Calu3 (cell line): ENCODE measurements at regions of chr2 and their contacts with region 1.

Region 1: GRCh38 chr2:173210270-173211196 is 134.9 kb downstream of the MAP3K20 start:
- DNase-seq: peak; percentile 65
- H3K4me3 Mint-ChIP-seq: no peak overlapping the region
- H3K27ac Mint-ChIP-seq: no peak overlapping the region
- H3K4me1 Mint-ChIP-seq: peaks cover 9% of the 10 kb centered on the region
- H3K27me3 Mint-ChIP-seq: no peaks in the 10 kb centered on the region
- CTCF ChIP-seq: peak; percentile 82

Region 2: DNA sequence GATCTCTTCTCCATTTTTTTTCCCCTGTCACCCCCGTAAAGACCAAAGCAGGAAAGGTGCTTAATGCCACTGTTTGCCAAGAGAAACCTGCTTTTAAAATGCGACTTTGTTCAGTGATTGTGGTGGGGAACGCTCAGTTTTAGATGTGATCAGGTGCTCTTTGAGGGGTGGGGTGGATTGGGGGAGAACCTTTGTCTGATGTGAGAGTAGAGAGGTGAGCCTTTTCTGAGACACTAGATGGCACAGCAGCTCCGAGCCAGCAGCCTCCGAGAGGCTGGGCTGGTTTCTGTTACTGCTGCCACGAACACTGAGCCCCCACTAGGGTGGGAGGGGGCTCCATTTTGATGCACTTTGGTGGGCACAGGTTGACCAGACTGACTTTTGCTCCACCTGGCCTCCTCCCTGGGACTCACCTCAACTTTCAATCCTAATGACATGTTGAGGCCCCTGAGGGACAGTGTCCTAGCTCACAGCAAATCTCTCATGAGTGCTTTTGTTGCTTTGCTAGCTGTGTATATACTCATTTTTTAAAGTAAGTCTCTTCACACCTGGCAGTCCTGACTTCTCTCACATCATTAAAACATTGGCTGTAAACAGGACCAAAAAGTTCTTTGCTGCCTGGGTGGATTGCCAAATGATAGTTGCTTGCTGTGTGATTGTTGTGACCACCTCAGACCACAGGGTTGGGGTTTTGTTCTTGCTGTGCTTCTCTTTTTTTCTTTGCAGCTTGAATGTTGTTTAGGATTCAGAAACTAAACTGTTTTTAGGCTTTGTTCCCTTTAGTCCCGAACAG is 233.1 kb before region 1 on chr2:
- CTCF ChIA-PET with region 1: no interaction called
- intact Hi-C with region 1: loop called (anchors 5 kb)
- DNase-seq: no peak
- H3K4me3 Mint-ChIP-seq: no peak overlapping the region
- H3K27ac Mint-ChIP-seq: no peak overlapping the region
- H3K4me1 Mint-ChIP-seq: peaks cover 20% of the 10 kb centered on the region
- H3K27me3 Mint-ChIP-seq: no peaks in the 10 kb centered on the region
- CTCF ChIP-seq: no peak

Region 3: GRCh38 chr2:173027181-173028128 is 183.1 kb before region 1 on chr2:
- CTCF ChIA-PET with region 1: interaction called, 15 read pairs
- intact Hi-C with region 1: loop called (anchors 1 kb)
- DNase-seq: peak; percentile 84
- H3K4me3 Mint-ChIP-seq: no peak overlapping the region
- H3K27ac Mint-ChIP-seq: no peak overlapping the region
- H3K4me1 Mint-ChIP-seq: peaks cover 10% of the 10 kb centered on the region
- H3K27me3 Mint-ChIP-seq: peaks cover 15% of the 10 kb centered on the region
- CTCF ChIP-seq: peak; percentile 82

Region 4: GRCh38 chr2:173075781-173076580 is 134.6 kb before region 1 on chr2 and contains the start of gene MAP3K20:
- CTCF ChIA-PET with region 1: no interaction called
- intact Hi-C with region 1: loop called (anchors 1 kb)
- DNase-seq: peak; percentile 67
- H3K4me3 Mint-ChIP-seq: peak within 1 kb of the TSS; percentile 80
- H3K27ac Mint-ChIP-seq: peak within 1 kb of the TSS; percentile 28
- H3K4me1 Mint-ChIP-seq: peaks cover 38% of the 10 kb centered on the region
- H3K27me3 Mint-ChIP-seq: no peaks in the 10 kb centered on the region
- CTCF ChIP-seq: peak; percentile 31
- total RNA-seq, gene MAP3K20: 37.0 and 47.9 TPM in 2 replicates

Region 5: DNA sequence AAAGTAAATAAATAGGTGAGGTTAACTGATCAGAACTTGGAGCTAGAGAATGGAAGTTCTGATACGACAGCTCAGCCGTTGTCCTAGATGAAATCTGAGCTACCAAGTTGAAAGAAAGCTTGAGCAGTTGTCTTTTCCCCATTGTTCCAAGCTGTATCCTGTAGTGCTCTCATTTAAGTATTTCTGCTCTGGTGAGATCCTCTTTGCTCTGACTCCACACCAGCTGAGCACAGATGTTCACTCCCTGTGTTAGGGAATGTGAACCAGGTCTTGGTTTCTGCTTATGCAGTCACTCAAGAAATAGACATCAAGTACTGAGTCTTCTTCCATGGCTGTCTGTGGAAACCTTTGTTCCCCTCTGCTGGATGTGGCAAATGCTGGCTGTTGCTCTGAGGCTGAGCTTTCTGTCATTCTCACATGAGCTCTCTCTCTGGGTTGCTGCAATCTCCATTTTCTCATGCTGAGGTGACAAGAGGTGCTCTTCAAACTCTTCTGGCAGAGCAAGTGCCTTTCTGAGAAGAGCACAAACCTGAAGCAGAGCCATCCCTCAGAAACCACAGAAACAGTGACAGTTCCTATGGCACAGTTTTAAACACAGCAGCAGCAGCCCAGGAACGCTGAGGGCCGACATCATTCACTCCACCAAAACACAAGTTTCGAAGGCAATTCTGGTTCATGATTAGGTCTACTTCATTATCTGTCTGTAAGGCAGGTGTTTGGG is 560.6 kb after region 1 on chr2:
- CTCF ChIA-PET with region 1: no interaction called
- intact Hi-C with region 1: no loop called
- DNase-seq: no peak
- H3K4me3 Mint-ChIP-seq: no peak overlapping the region
- H3K27ac Mint-ChIP-seq: no peak overlapping the region
- H3K4me1 Mint-ChIP-seq: no peaks in the 10 kb centered on the region
- H3K27me3 Mint-ChIP-seq: no peaks in the 10 kb centered on the region
- CTCF ChIP-seq: no peak